Activated CD4-positive, alpha-beta T cell treated with anti-CD3 and anti-CD28 coated beads for 36 hours (primary cell): ENCODE measurements at regions of chr10 and their contacts with region 1.

Region 1: GRCh38 chr10:32367793-32368453 is 21.0 kb upstream of the EPC1 start:
- DNase-seq: peak; percentile 86
- ATAC-seq: peak; percentile 20
- H3K4me3 Mint-ChIP-seq: peak overlapping the region; percentile 0
- H3K27ac Mint-ChIP-seq: peak overlapping the region; percentile 5
- H3K4me1 Mint-ChIP-seq: peaks cover 62% of the 10 kb centered on the region
- H3K27me3 Mint-ChIP-seq: no peaks in the 10 kb centered on the region

Region 2: DNA sequence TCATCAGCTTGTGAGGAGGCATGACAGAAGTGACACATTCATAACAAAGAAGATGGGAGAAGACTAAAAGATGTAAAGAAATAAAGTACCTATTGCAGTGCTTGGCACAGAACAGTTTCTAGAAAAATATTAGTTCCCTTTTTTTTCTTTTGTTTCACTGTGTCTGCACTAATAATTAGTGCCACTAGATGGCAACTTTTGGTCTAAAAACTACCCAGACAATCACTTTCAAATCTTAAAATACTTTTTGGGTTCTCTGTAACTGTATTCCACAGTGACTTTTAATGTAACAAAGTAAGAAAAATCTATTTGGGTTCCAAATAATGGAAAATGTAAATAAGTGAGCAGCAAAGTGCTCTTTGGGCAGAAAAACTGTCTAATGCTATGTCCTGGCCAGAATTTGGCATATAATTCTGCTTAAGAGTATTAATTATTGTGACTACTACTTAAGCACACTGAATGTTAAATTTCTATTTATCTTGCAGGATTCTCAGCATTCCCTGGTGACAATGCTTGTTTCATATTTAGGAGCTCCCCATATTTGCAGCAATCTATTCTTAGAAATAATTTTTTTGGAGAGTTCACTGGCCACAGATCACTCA is 176.9 kb before region 1 on chr10:
- CTCF ChIA-PET with region 1: interaction called, 9 read pairs
- POLR2A ChIA-PET with region 1: no interaction called
- intact Hi-C with region 1: loop called (anchors 1 kb)
- DNase-seq: no peak
- ATAC-seq: no peak
- H3K4me3 Mint-ChIP-seq: no peak overlapping the region
- H3K27ac Mint-ChIP-seq: no peak overlapping the region
- H3K4me1 Mint-ChIP-seq: peaks cover 2% of the 10 kb centered on the region
- H3K27me3 Mint-ChIP-seq: no peaks in the 10 kb centered on the region

Region 3: GRCh38 chr10:32256613-32257437 is 111.1 kb before region 1 on chr10:
- CTCF ChIA-PET with region 1: interaction called, 19 read pairs
- POLR2A ChIA-PET with region 1: interaction called, 6 read pairs
- intact Hi-C with region 1: loop called (anchors 1 kb)
- DNase-seq: peak; percentile 80
- ATAC-seq: peak; percentile 74
- H3K4me3 Mint-ChIP-seq: no peak overlapping the region
- H3K27ac Mint-ChIP-seq: no peak overlapping the region
- H3K4me1 Mint-ChIP-seq: peaks cover 9% of the 10 kb centered on the region
- H3K27me3 Mint-ChIP-seq: no peaks in the 10 kb centered on the region

Region 4: DNA sequence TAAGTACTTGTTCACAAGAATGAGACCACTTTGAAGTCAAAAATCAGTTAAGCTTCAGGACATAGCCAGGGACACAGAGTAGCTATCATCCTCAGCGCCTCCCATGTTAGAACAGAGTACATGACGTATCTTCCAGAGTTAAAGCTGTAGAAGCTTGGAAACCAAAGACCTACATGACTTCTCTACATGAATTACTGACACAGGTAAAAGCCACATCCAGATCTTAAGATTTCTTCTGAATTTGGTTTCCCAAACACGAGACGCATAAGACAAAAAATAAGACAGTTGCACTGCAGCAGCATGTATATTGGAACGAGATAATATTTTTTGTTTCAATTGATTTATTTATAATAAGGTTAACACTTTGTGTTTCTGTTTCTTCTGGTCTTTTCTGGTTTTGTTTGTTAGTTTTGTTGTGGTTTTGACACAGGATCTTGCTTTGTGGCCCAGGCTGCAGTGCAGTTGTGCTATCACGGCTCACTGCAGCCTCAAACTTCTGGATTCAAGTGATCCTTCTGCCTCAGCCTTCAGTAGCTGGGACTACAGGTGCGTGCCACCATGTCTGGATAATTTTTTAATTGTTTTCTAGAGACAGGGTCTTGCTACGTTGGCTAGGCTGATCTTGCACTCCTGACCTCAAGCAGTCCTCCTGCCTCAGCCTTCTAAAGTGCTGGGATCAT is 10.7 kb before region 1 on chr10:
- CTCF ChIA-PET with region 1: interaction called, 20 read pairs
- POLR2A ChIA-PET with region 1: interaction called, 3 read pairs
- intact Hi-C with region 1: loop called in 1 of 2 experiments (anchors 1 kb)
- DNase-seq: peak; percentile 47
- ATAC-seq: peak; percentile 85
- H3K4me3 Mint-ChIP-seq: peak overlapping the region; percentile 24
- H3K27ac Mint-ChIP-seq: peak overlapping the region; percentile 72
- H3K4me1 Mint-ChIP-seq: peaks cover 68% of the 10 kb centered on the region
- H3K27me3 Mint-ChIP-seq: no peaks in the 10 kb centered on the region